ENCODE measurements at regions of chr6 and their contacts with region 1.

Region 1: DNA sequence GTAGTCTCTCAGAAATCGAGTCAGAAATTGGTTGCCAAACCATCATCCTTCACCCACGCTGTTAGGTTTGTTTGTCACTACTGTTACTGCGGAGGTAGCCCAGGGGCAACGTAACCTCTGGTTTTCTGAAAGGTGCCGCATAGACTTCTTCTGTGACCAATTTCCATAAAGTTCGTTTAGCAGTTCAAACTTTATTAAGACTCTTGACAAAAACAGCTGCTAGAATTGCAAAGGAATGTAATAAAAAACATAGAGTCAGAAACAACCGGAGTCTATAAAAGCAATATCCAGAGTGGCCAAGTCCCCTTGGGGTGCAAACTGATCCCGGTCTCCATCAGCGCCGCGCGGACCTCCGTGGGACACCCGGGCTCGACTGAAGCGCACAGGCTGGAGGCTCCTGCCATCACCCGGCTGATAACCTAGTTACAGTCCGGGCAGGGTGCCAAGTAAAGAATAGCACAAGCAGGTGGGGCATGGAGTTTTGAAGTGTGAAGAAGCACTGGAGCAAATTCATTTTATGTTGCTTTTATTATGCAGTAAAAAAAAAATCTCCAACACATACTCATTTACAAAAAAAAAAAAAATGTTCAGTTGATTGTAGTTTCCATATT is 205.0 kb upstream of the GMDS start:
- DNase-seq: peak; percentile 76 to 80
- H3K4me3 ChIP-seq: no peak overlapping the region
- H3K27ac ChIP-seq: no peak overlapping the region
- H3K4me1 ChIP-seq: peaks cover 0 to 7% (median 1%) of the 10 kb centered on the region in 4 donors
- H3K27me3 ChIP-seq: no peaks in the 10 kb centered on the region
- CTCF ChIP-seq: no peak
- EP300 ChIP-seq: no peak
- POLR2A ChIP-seq: no peak

Region 2: GRCh38 chr6:2634139-2634964 is 183.9 kb after region 1 on chr6:
- intact Hi-C with region 1: loop called (anchors 10 kb)
- DNase-seq: peak; percentile 84 to 94
- H3K4me3 ChIP-seq: peak overlapping the region; percentile 45 to 66 (median 54)
- H3K27ac ChIP-seq: peak overlapping the region in 4 of 5 donors; percentile 42 to 78 (median 62)
- H3K4me1 ChIP-seq: peaks cover 9 to 30% (median 22%) of the 10 kb centered on the region in 4 donors
- H3K27me3 ChIP-seq: peaks cover 0 to 5% (median 0%) of the 10 kb centered on the region in 3 donors
- CTCF ChIP-seq: peak in 6 of 7 experiments; percentile 85 to 99 (median 94)
- EP300 ChIP-seq: no peak
- POLR2A ChIP-seq: no peak

Region 3: GRCh38 chr6:2791124-2791974 is 340.9 kb after region 1 on chr6:
- intact Hi-C with region 1: no loop called
- DNase-seq: peak; percentile 76 to 91
- H3K4me3 ChIP-seq: peak overlapping the region in 1 of 4 donors; percentile 9
- H3K27ac ChIP-seq: peak overlapping the region in 4 of 5 donors; percentile 74 to 86 (median 80)
- H3K4me1 ChIP-seq: peaks cover 0 to 58% (median 30%) of the 10 kb centered on the region in 4 donors
- H3K27me3 ChIP-seq: no peaks in the 10 kb centered on the region
- CTCF ChIP-seq: peak in 5 of 7 experiments; percentile 55 to 95 (median 72)
- EP300 ChIP-seq: no peak
- POLR2A ChIP-seq: no peak

Measured in stomach (tissue), 19 donors.